ENCODE measurements at regions of chr10 and their contacts with region 1.

Region 1: GRCh38 chr10:27241652-27242472 is 1.3 kb upstream of the ACBD5 start:
- DNase-seq: peak; percentile 70 to 95 (median 84)
- ATAC-seq: peak; percentile 61
- H3K4me3 ChIP-seq: peak overlapping the region; percentile 92
- H3K4me3 Mint-ChIP-seq: peak overlapping the region; percentile 88
- H3K27ac ChIP-seq: peak overlapping the region; percentile 85 to 97
- H3K27ac Mint-ChIP-seq: peak overlapping the region; percentile 94
- H3K4me1 ChIP-seq: peaks cover 35% of the 10 kb centered on the region
- H3K4me1 Mint-ChIP-seq: peaks cover 50% of the 10 kb centered on the region
- H3K27me3 ChIP-seq: no peaks in the 10 kb centered on the region
- H3K27me3 Mint-ChIP-seq: no peaks in the 10 kb centered on the region
- CTCF ChIP-seq: peak; percentile 49

Region 2: GRCh38 chr10:27192284-27192683 is 49.6 kb before region 1 on chr10:
- CTCF ChIA-PET with region 1: no interaction called
- POLR2A ChIA-PET with region 1: no interaction called
- intact Hi-C with region 1: no loop called
- DNase-seq: no peak
- ATAC-seq: no peak
- H3K4me3 ChIP-seq: no peak overlapping the region
- H3K4me3 Mint-ChIP-seq: no peak overlapping the region
- H3K27ac ChIP-seq: no peak overlapping the region
- H3K27ac Mint-ChIP-seq: no peak overlapping the region
- H3K4me1 ChIP-seq: no peaks in the 10 kb centered on the region
- H3K4me1 Mint-ChIP-seq: no peaks in the 10 kb centered on the region
- H3K27me3 ChIP-seq: no peaks in the 10 kb centered on the region
- H3K27me3 Mint-ChIP-seq: no peaks in the 10 kb centered on the region
- CTCF ChIP-seq: no peak

Region 3: DNA sequence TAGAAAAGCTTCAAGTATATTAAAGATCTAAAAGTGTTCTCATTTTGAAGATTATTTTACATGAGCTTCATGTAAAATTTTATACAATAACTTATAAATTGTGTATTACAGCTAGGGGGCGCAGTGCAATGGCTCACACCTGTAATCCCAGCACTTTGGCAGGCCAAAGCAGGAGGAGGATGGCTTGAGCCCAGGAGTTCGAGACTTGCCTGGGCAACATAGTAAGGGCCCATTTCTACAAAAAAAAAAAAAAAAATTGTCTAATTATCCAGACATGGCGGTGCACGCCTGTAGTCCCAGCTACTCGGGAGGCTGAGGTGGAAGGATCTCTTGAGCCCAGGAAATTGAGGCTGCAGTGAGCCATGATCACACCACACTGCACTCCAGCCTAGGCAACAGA is 17.9 kb before region 1 on chr10:
- CTCF ChIA-PET with region 1: interaction called, 12 read pairs
- POLR2A ChIA-PET with region 1: interaction called, 11 read pairs
- intact Hi-C with region 1: loop called in 1 of 2 experiments (anchors 2 kb)
- DNase-seq: peak; percentile 11 to 79 (median 32)
- ATAC-seq: peak; percentile 68
- H3K4me3 ChIP-seq: no peak overlapping the region
- H3K4me3 Mint-ChIP-seq: no peak overlapping the region
- H3K27ac ChIP-seq: no peak overlapping the region
- H3K27ac Mint-ChIP-seq: peak overlapping the region; percentile 40
- H3K4me1 ChIP-seq: peaks cover 9% of the 10 kb centered on the region
- H3K4me1 Mint-ChIP-seq: peaks cover 15% of the 10 kb centered on the region
- H3K27me3 ChIP-seq: no peaks in the 10 kb centered on the region
- H3K27me3 Mint-ChIP-seq: no peaks in the 10 kb centered on the region
- CTCF ChIP-seq: peak; percentile 87

Region 4: GRCh38 chr10:27252267-27253000 is 10.6 kb after region 1 on chr10:
- CTCF ChIA-PET with region 1: interaction called, 21 read pairs
- POLR2A ChIA-PET with region 1: interaction called, 52 read pairs
- intact Hi-C with region 1: no loop called
- DNase-seq: peak; percentile 63 to 86 (median 78)
- ATAC-seq: peak; percentile 92
- H3K4me3 ChIP-seq: peak overlapping the region; percentile 58
- H3K4me3 Mint-ChIP-seq: peak overlapping the region; percentile 90
- H3K27ac ChIP-seq: peak overlapping the region in 1 of 2 donors; percentile 46
- H3K27ac Mint-ChIP-seq: peak overlapping the region; percentile 83
- H3K4me1 ChIP-seq: peaks cover 12% of the 10 kb centered on the region
- H3K4me1 Mint-ChIP-seq: peaks cover 11% of the 10 kb centered on the region
- H3K27me3 ChIP-seq: peaks cover 0 to under 1% of the 10 kb centered on the region in 2 experiments
- H3K27me3 Mint-ChIP-seq: peaks cover 6% of the 10 kb centered on the region
- CTCF ChIP-seq: peak; percentile 87

Region 5: DNA sequence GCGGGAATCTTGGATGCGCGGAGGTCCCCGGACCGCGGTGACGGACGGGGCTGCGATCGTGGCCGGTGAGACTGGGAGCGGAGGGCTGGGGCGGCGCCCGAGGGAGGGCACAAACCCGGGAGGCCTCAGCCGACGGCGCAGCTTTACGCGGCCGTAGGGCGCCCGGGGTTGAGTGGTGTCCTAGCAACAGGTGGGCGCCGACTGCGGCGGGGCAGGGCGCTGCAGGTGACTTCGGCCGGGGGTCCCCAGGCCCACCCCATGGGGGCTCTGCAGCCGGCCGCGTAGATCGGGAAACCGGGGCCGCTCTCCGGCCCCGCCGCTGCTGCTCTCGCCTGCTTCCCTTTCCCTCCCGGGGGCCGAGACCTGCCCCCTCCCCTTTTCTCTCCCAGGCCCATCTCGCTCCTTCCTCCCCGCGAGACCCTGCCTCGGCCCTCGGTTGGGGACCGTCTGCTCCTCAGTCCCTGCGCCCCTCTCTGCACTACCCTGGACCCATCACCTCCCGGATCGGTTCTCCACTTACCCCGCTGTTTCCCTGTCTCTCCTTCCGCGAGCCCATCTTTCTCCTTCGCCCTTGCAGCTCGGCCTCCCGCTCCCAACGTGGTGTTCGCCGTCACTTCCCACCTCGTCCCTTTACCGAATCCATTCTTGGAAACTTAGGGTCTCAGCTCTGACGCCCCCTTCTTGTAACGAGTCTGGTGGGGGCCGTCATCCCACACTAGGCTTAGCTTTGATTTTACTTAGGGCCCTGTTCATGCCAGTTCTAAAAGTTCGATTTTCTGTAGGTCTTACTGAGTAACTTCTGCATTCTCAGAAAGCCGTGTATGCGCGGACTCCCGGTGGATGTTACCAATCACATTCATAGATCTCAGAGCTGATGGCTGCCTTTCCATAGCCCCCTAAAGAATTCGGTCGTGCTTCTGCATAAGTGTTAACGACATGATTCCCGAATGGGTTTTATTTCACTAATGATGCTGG is 17.3 kb after region 1 on chr10:
- CTCF ChIA-PET with region 1: interaction called, 3 read pairs
- POLR2A ChIA-PET with region 1: interaction called, 52 read pairs
- intact Hi-C with region 1: loop called in 1 of 2 experiments (anchors 2 kb)
- DNase-seq: peak in 3 of 14 experiments; percentile 34 to 46 (median 38)
- ATAC-seq: no peak
- H3K4me3 ChIP-seq: peak overlapping the region; percentile 53
- H3K4me3 Mint-ChIP-seq: peak overlapping the region; percentile 91
- H3K27ac ChIP-seq: no peak overlapping the region
- H3K27ac Mint-ChIP-seq: no peak overlapping the region
- H3K4me1 ChIP-seq: peaks cover 21% of the 10 kb centered on the region
- H3K4me1 Mint-ChIP-seq: peaks cover 25% of the 10 kb centered on the region
- H3K27me3 ChIP-seq: peaks cover 22 to 37% of the 10 kb centered on the region in 2 experiments
- H3K27me3 Mint-ChIP-seq: peaks cover 62% of the 10 kb centered on the region
- CTCF ChIP-seq: no peak

Region 6: GRCh38 chr10:27285108-27285507 is 43.2 kb after region 1 on chr10:
- CTCF ChIA-PET with region 1: no interaction called
- POLR2A ChIA-PET with region 1: no interaction called
- intact Hi-C with region 1: loop called in 1 of 2 experiments (anchors 5 kb)
- DNase-seq: peak in 8 of 14 experiments; percentile 3 to 69 (median 36)
- ATAC-seq: peak; percentile 78
- H3K4me3 ChIP-seq: no peak overlapping the region
- H3K4me3 Mint-ChIP-seq: no peak overlapping the region
- H3K27ac ChIP-seq: no peak overlapping the region
- H3K27ac Mint-ChIP-seq: no peak overlapping the region
- H3K4me1 ChIP-seq: no peaks in the 10 kb centered on the region
- H3K4me1 Mint-ChIP-seq: no peaks in the 10 kb centered on the region
- H3K27me3 ChIP-seq: no peaks in the 10 kb centered on the region
- H3K27me3 Mint-ChIP-seq: peaks cover 4% of the 10 kb centered on the region
- CTCF ChIP-seq: peak; percentile 57

Region 7: DNA sequence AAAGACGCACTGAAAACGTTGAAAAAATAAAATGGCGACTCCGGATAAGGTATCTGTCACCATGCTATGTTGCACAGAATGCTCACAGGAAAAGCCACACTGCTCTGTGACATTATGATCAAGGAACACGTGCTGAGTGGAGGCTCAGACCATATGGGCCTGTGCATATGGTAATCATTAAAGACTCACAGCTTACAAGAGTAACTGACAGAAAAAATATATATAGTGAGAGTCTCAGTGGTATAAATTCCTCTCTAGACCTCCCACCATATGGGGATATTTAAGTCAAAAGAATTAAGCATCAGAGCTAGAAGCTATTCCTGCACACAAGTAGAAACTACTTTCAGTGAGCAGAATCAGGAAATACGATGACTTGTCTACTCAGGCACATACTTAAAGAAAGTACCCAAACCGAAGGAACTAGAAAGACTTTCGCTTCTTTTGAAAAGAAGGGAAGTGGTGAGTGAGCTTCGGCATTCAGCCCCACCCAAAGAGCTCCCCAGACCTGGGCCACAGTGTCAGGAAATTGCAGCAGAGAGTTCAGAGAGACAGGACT is 1126.1 kb after region 1 on chr10:
- CTCF ChIA-PET with region 1: no interaction called
- POLR2A ChIA-PET with region 1: no interaction called
- intact Hi-C with region 1: loop called in 1 of 2 experiments (anchors 10 kb)
- DNase-seq: peak; percentile 22 to 92 (median 56)
- ATAC-seq: peak; percentile 92
- H3K4me3 ChIP-seq: peak overlapping the region; percentile 6
- H3K4me3 Mint-ChIP-seq: peak overlapping the region; percentile 80
- H3K27ac ChIP-seq: peak overlapping the region; percentile 69 to 79
- H3K27ac Mint-ChIP-seq: peak overlapping the region; percentile 91
- H3K4me1 ChIP-seq: peaks cover 59% of the 10 kb centered on the region
- H3K4me1 Mint-ChIP-seq: peaks cover 58% of the 10 kb centered on the region
- H3K27me3 ChIP-seq: no peaks in the 10 kb centered on the region
- H3K27me3 Mint-ChIP-seq: no peaks in the 10 kb centered on the region
- CTCF ChIP-seq: no peak

Region 8: DNA sequence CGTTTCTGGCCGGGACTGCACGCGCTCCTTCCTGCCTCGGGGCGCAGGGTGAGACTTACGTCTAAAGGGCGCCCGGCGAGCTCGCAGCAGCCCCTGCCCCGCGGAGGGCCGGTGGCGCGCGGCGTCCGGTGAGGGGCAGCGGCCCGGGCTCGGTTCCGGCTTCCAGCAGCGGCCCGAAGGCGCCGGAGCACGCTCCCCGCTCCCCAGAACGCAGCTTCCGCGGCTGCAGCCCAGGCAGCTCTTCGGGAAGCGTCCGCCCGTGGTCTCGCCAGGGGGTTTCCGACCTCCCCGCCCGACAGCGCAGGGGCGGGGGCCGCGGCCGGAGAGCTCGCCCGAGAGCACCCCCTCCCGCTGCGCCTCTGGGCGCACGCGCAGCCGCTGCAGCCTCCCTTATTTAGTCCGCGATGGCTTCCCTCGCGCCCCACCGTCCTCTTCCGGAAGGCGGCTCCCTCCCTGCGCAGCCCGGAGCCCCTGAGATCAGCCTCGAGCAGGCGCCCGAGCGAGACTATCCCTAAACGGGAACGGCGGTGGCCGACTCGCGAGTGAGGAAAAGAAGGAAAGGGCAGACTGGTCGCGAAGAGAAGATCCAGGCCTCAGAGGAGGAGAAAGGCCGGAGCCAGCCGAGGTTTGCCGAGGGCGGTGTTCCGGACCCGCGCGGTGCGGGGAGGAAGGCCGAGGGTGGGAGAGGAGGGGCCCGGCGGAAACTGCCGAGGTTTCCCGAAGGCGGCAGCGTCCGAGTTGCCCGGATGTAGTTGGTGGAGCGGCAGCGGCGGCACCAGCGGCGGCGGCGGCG is 1290.7 kb after region 1 on chr10 and contains the start of gene WAC:
- CTCF ChIA-PET with region 1: no interaction called
- POLR2A ChIA-PET with region 1: interaction called, 9 read pairs
- intact Hi-C with region 1: loop called in 1 of 2 experiments (anchors 2 kb)
- DNase-seq: peak; percentile 93 to 98 (median 97)
- ATAC-seq: peak; percentile 81
- H3K4me3 ChIP-seq: peak within 1 kb of the TSS; percentile 98
- H3K4me3 Mint-ChIP-seq: peak within 1 kb of the TSS; percentile 100
- H3K27ac ChIP-seq: peak within 1 kb of the TSS; percentile 99
- H3K27ac Mint-ChIP-seq: peak within 1 kb of the TSS; percentile 98
- H3K4me1 ChIP-seq: peaks cover 22% of the 10 kb centered on the region
- H3K4me1 Mint-ChIP-seq: peaks cover 73% of the 10 kb centered on the region
- H3K27me3 ChIP-seq: no peaks in the 10 kb centered on the region
- H3K27me3 Mint-ChIP-seq: no peaks in the 10 kb centered on the region
- CTCF ChIP-seq: peak; percentile 30
- total RNA-seq, gene WAC: 169 to 177 TPM

Measured in CD4-positive, alpha-beta T cell (primary cell).